MCF 10A (cell line): ENCODE measurements at regions of chr3 and their contacts with region 1.

Region 1: GRCh38 chr3:44883999-44884431 is 9.6 kb downstream of the TGM4 start:
- DNase-seq: peak; percentile 96
- H3K4me3 Mint-ChIP-seq: peak overlapping the region; percentile 30
- H3K27ac Mint-ChIP-seq: peak overlapping the region; percentile 98
- H3K4me1 Mint-ChIP-seq: peaks cover 47% of the 10 kb centered on the region
- H3K27me3 Mint-ChIP-seq: no peaks in the 10 kb centered on the region
- CTCF ChIP-seq: no peak

Region 2: GRCh38 chr3:44861412-44862220 is 22.4 kb before region 1 on chr3 and contains the start of gene TMEM42:
- CTCF ChIA-PET with region 1: interaction called, 3 read pairs
- POLR2A ChIA-PET with region 1: interaction called, 8 read pairs
- intact Hi-C with region 1: loop called (anchors 1 kb)
- DNase-seq: peak; percentile 79
- H3K4me3 Mint-ChIP-seq: peak within 1 kb of the TSS; percentile 78
- H3K27ac Mint-ChIP-seq: peak within 1 kb of the TSS; percentile 79
- H3K4me1 Mint-ChIP-seq: no peaks in the 10 kb centered on the region
- H3K27me3 Mint-ChIP-seq: no peaks in the 10 kb centered on the region
- CTCF ChIP-seq: no peak
- total RNA-seq, gene TMEM42: 27.6 and 27.8 TPM in 2 replicates

Region 3: DNA sequence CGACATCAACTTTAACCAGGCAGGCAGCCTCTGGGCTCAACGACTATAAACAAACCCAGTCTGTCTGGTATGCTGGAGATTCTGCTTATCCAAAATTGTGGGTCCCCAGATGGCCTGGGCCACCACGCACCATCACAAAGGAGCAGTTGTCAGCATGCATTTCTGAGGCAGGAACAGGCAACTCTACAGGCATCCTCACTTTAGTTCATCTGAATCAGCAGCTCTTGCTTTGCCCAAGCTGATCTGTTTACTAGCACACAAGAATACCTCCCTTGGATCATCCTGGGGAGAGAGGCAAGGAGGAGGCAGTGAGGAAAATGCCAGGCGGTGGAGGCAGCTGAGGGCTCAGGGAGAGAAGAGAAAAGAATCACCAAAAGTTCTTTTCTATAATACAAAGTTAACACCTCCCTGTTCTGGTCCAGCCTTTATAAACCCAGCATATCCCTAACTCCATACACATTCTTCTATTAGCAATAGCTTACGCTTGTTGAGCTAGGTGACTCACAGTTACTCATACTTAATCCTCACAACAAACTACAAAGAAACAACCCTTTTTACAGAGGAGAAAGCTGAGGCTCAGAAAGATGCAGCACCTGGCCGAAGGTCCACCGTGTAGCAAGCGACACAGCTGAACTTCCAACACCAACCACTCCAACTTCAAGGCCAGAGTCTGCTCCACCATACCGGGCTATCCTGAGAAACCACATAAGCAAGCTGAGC is 58.3 kb after region 1 on chr3:
- CTCF ChIA-PET with region 1: interaction called, 3 read pairs
- POLR2A ChIA-PET with region 1: no interaction called
- intact Hi-C with region 1: loop called (anchors 2 kb)
- DNase-seq: peak; percentile 33
- H3K4me3 Mint-ChIP-seq: no peak overlapping the region
- H3K27ac Mint-ChIP-seq: no peak overlapping the region
- H3K4me1 Mint-ChIP-seq: no peaks in the 10 kb centered on the region
- H3K27me3 Mint-ChIP-seq: no peaks in the 10 kb centered on the region
- CTCF ChIP-seq: no peak

Region 4: DNA sequence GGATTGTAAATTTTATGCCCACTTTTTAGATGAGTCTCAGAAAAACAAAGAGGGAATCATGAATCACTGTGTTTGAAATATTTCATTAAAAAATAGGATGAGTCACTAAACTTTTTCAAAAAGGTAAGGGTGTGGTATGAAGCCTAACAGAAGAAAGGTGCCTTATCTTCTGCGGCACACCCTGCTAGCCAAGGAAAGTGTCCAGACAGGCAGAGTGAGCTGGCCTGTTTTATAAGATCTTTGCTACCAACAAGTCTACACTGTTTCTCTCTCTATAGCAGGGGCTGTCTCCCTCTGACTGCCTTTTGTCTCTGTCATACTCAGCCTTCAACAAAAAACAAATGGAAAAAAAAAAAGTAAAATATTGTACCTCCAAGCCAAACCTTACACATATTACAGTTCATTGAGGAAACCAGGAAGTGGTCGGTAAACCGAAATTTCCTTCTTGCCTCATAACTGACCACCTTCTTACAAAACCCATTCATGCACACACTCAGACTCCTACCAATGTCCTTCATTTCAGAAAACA is 82.8 kb after region 1 on chr3:
- CTCF ChIA-PET with region 1: no interaction called
- POLR2A ChIA-PET with region 1: interaction called, 11 read pairs
- intact Hi-C with region 1: loop called (anchors 10 kb)
- DNase-seq: peak; percentile 66
- H3K4me3 Mint-ChIP-seq: peak overlapping the region; percentile 15
- H3K27ac Mint-ChIP-seq: peak overlapping the region; percentile 85
- H3K4me1 Mint-ChIP-seq: peaks cover 61% of the 10 kb centered on the region
- H3K27me3 Mint-ChIP-seq: no peaks in the 10 kb centered on the region
- CTCF ChIP-seq: no peak

Region 5: DNA sequence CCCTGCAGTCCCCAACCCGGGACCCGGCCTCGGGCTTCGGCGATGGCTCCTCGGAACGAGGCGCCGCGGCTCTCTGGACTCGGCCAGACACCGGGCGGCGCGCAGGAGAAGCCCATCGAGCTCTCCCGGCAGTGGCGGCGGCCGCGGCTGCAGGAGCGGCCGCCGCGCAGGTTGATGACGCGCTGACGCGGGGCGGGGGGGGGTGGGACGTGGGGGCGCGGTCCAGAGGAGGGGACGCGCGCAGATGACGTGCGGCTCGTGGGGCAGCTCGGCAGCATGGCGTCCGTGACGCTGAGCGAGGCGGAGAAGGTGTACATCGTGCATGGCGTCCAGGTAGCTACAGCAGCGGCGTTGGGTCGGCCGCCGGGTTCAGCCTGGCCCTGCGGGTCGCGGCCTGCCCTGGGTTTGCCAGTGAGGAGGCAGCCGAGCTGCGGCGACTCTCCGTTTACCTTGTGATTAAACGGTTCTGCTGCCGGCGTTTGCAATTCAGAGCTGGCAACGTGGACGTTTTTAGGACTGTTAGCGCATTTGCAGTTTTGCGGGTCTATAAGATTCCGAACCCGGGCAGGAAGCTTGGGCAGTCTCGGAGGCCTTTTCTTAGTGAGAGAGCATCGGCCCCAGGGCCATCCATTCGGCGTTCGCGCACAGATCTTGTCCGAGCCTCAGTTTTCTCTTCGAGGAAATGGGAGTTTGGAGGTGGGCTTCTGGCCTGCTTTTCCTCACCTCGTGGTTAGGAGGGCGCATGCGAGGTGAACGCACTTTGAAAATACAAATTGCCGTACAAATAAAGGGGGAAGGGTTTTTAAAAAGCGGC is 92.2 kb after region 1 on chr3 and contains the starts of genes EXOSC7 and ZDHHC3:
- CTCF ChIA-PET with region 1: no interaction called
- POLR2A ChIA-PET with region 1: interaction called, 36 read pairs
- intact Hi-C with region 1: loop called (anchors 10 kb)
- DNase-seq: peak; percentile 84
- H3K4me3 Mint-ChIP-seq: peak within 1 kb of the TSS; percentile 99
- H3K27ac Mint-ChIP-seq: peak within 1 kb of the TSS; percentile 97
- H3K4me1 Mint-ChIP-seq: peaks cover 37% of the 10 kb centered on the region
- H3K27me3 Mint-ChIP-seq: no peaks in the 10 kb centered on the region
- CTCF ChIP-seq: no peak
- total RNA-seq, gene EXOSC7: 59.7 and 73.3 TPM in 2 replicates
- total RNA-seq, gene ZDHHC3: 37.7 and 40.1 TPM in 2 replicates